Activated B cell treated with CpG ODN at 0.5 μM for 24 hours (primary cell): ENCODE measurements at regions of chr13 and their contacts with region 1.

Region 1: DNA sequence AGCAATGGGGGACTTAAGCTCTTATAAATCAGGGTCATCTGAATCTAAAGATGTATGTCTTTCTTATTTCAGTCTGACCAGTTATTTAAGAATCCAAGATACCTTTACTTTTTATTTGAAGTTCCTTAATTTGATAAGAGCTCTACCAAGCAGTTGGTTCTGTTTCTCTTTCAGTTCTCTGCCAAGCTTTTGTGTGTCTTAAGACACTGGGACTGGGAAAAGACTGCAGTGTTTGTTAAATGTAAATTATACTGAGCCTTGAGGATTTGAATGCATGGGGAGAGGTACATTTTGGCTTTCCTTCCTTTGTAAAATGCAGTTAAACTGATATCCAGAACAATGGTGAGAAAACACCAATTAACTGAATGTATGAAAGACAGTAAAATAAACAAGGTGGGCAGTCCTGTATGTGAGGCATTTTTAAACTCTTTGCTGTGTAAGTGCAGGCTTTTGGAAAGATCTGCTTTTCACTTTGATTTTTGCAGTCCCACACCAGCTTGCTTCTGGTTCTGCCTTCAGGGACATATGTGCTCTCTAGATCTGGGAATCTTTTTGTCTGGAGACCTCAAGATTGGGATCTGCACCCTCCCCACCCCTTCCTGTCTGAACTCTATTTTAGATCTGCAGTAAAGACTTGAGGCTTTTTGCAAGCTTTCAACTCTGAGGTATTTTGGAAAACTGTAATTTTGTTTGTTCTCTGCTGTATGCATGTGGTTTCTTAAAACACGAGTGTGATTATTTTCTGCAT is 77.6 kb downstream of the LRCH1 start:
- DNase-seq: no peak
- ATAC-seq: peak; percentile 34
- H3K4me3 Mint-ChIP-seq: peak overlapping the region; percentile 29
- H3K27ac Mint-ChIP-seq: peak overlapping the region; percentile 67
- H3K4me1 Mint-ChIP-seq: peaks cover 83% of the 10 kb centered on the region
- H3K27me3 Mint-ChIP-seq: no peaks in the 10 kb centered on the region
- CTCF ChIP-seq: no peak

Region 2: DNA sequence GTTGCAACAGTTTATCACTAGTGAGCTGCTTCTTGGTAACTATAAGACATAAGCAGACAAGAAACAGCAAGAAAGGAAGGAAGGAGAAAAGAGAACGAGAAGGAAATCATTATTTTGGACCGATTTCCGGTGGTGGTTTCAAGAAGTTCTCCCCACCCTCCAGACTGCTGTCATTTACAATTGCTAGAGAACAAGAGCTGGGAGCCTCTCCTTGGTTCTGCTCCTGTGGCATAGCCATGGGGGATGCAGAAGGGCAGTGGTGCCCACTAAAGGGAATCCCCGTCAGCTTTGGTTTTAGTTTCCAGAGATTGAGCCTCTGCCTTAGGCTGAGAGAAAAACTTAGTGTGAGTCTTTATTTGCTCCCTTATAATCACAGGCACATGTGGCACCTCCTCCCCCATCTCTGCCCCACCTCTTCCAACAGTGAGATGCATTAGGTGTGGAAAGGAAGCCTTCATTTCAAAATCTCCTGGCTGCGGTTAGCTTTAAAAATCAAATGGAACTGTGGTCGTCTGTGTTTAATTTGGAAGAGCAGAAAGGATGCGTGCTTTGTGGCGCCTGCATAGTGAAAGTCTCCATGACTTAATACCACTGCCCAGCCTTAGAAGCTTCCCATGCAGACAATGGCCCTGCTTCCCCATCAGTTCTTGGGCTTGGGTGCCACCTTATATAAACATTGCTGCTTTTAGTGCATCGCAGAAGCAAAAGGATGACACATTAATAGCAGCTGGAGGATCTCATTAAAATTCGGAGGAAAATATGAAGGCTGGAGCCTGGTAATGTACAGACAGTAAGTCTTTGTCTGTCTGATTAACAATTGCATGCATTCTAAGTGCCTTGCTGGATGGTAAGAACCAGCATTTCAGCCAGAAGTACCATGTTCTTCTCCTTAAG is 52.7 kb before region 1 on chr13:
- CTCF ChIA-PET with region 1: no interaction called
- POLR2A ChIA-PET with region 1: no interaction called
- intact Hi-C with region 1: no loop called
- DNase-seq: no peak
- ATAC-seq: peak; percentile 41
- H3K4me3 Mint-ChIP-seq: peak overlapping the region; percentile 65
- H3K27ac Mint-ChIP-seq: peak overlapping the region; percentile 90
- H3K4me1 Mint-ChIP-seq: peaks cover 87% of the 10 kb centered on the region
- H3K27me3 Mint-ChIP-seq: no peaks in the 10 kb centered on the region
- CTCF ChIP-seq: no peak

Region 3: DNA sequence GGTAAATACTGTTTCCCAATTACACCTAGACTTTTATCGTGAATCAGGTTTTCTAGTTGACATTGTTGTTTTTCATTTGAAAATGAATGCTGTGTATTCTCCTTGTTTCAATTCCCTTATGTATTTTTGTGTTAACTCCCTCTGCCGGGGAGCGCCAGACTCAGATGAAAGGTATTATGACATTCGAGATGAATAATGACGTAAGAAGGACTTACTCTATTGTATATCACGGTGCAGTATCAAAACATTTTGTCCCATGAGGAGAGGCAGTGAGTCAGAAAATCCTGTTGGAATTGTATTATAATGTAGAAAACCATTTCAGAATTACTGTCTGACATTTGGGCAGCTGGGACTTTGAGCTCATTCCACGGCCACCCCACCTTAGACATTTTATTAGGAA is 16.0 kb before region 1 on chr13:
- CTCF ChIA-PET with region 1: no interaction called
- POLR2A ChIA-PET with region 1: no interaction called
- intact Hi-C with region 1: loop called (anchors 2 kb)
- DNase-seq: no peak
- ATAC-seq: no peak
- H3K4me3 Mint-ChIP-seq: no peak overlapping the region
- H3K27ac Mint-ChIP-seq: no peak overlapping the region
- H3K4me1 Mint-ChIP-seq: peaks cover 86% of the 10 kb centered on the region
- H3K27me3 Mint-ChIP-seq: no peaks in the 10 kb centered on the region
- CTCF ChIP-seq: no peak

Region 4: GRCh38 chr13:46874006-46874405 is 243.4 kb after region 1 on chr13:
- CTCF ChIA-PET with region 1: no interaction called
- POLR2A ChIA-PET with region 1: no interaction called
- intact Hi-C with region 1: no loop called
- DNase-seq: no peak
- ATAC-seq: no peak
- H3K4me3 Mint-ChIP-seq: no peak overlapping the region
- H3K27ac Mint-ChIP-seq: no peak overlapping the region
- H3K4me1 Mint-ChIP-seq: no peaks in the 10 kb centered on the region
- H3K27me3 Mint-ChIP-seq: peaks cover 22% of the 10 kb centered on the region
- CTCF ChIP-seq: no peak

Region 5: GRCh38 chr13:46947425-46948191 is 317.0 kb after region 1 on chr13:
- CTCF ChIA-PET with region 1: no interaction called
- POLR2A ChIA-PET with region 1: no interaction called
- intact Hi-C with region 1: no loop called
- DNase-seq: no peak
- ATAC-seq: no peak
- H3K4me3 Mint-ChIP-seq: no peak overlapping the region
- H3K27ac Mint-ChIP-seq: no peak overlapping the region
- H3K4me1 Mint-ChIP-seq: peaks cover 8% of the 10 kb centered on the region
- H3K27me3 Mint-ChIP-seq: no peaks in the 10 kb centered on the region
- CTCF ChIP-seq: no peak